Lower leg skin (tissue), 4 donors: ENCODE measurements at regions of chr10 and their contacts with region 1.

Region 1: DNA sequence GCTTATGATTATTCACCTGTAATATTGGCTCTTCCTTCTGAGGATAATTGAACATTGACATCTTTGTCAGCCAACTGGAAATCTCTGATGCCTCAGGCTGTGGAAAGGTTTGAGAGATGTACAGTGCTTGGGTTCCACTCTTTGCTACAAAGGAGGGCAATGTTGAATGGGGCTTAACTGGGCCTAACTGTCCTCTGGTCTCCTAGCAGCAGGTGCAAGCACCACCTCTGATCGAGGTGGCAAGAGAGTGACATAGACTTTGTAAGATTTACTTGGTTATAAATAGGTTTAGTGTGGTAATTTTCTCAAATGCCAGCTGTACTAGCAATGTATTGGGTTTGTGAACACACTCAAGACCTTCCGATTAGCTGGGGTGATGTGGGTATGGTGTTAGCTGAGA is 21.1 kb downstream of the CYP2C8 start:
- DNase-seq: no peak
- H3K4me3 ChIP-seq: no peak overlapping the region
- CTCF ChIP-seq: no peak
- POLR2A ChIP-seq: no peak

Region 2: DNA sequence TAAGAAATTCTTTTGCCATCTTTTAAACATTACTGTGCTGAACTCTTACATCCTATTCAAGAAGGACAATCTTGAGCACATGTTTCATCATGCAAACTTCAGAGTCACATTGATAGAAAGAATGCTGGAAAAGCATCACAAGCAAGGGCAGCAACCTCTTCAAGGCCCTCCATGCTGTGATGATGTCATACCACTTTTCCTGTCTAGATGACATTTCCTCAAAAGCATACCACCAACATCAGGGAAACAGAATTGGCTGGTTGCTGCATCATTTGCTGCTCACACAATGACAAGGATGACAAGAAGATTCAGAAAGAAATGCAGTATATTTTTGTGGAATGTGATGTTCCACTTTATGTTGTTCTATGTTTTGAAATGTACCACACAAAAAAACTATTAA is 16.6 kb before region 1 on chr10:
- intact Hi-C with region 1: loop called (anchors 2 kb)
- DNase-seq: no peak
- H3K4me3 ChIP-seq: no peak overlapping the region
- CTCF ChIP-seq: no peak
- POLR2A ChIP-seq: no peak